Prostate gland (tissue), 2 donors: ENCODE measurements at regions of chr13 and their contacts with region 1.

Region 1: GRCh38 chr13:98495627-98496478 is 81.1 kb downstream of the STK24 start:
- DNase-seq: no peak
- H3K4me3 ChIP-seq: no peak overlapping the region
- H3K27ac ChIP-seq: peak overlapping the region; percentile 70 to 75
- H3K4me1 ChIP-seq: peaks cover 15% of the 10 kb centered on the region
- H3K27me3 ChIP-seq: no peaks in the 10 kb centered on the region
- CTCF ChIP-seq: no peak
- POLR2A ChIP-seq: no peak

Region 2: DNA sequence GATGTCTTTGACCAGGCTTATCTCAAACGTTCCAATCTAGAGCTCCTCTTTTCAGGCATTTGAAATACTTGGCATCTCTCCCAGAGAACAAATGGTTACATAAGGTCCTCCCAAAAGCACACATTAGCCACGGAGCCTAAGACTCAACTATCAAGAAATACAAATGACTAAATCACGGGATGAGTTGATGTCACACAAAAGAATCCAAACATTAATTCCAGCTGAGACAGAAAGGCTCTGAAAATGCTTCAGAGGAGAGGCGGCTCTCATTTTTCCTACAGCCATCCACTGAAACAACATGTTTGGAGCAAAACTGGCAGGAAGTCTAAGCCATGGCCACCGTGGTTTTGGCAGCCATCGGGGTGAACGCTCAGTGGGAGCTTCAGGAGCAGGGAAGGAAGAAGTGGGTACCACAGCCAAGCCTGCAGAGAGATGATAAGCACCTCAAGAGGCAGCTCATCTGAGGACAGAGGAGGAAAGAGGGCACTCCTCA is 41.4 kb before region 1 on chr13:
- intact Hi-C with region 1: loop called (anchors 5 kb)
- DNase-seq: peak; percentile 50
- H3K4me3 ChIP-seq: no peak overlapping the region
- H3K27ac ChIP-seq: peak overlapping the region; percentile 66 to 71
- H3K4me1 ChIP-seq: peaks cover 16% of the 10 kb centered on the region
- H3K27me3 ChIP-seq: no peaks in the 10 kb centered on the region
- CTCF ChIP-seq: no peak
- POLR2A ChIP-seq: no peak